RWPE1 (cell line): ENCODE measurements at regions of chr3 and their contacts with region 1.

Region 1: GRCh38 chr3:136752422-136753325 is 496 bp upstream of the STAG1 start:
- DNase-seq: peak; percentile 93
- H3K27ac ChIP-seq: peak overlapping the region; percentile 98
- CTCF ChIP-seq: peak; percentile 48

Region 2: DNA sequence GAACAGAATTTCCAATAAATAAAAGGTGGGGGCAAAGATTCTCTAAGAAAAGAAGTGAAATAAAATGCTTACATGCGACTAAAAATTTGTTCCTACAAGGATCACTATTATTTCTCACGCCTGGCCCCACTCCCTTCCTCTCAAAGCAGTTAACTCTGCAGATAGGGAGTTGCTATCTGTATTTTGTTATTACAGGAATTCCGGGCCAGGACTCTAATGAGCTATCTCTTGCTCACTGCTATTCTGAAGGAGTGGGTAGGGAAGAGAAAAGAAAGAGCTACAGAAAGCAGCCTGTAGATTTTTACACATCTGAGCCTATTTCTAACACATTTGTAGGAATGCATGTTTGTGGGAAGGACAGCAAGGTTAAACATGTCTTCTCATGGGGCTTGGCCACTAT is 362.1 kb before region 1 on chr3:
- CTCF ChIA-PET with region 1: interaction called, 17 read pairs
- POLR2A ChIA-PET with region 1: interaction called, 4 read pairs
- DNase-seq: no peak
- H3K27ac ChIP-seq: no peak overlapping the region
- CTCF ChIP-seq: no peak

Region 3: GRCh38 chr3:136414476-136414875 is 338.2 kb before region 1 on chr3:
- CTCF ChIA-PET with region 1: interaction called, 14 read pairs
- POLR2A ChIA-PET with region 1: no interaction called
- DNase-seq: no peak
- H3K27ac ChIP-seq: no peak overlapping the region
- CTCF ChIP-seq: no peak

Region 4: GRCh38 chr3:137013955-137014688 is 261.4 kb after region 1 on chr3:
- CTCF ChIA-PET with region 1: interaction called, 14 read pairs
- POLR2A ChIA-PET with region 1: interaction called, 7 read pairs
- DNase-seq: peak; percentile 85
- H3K27ac ChIP-seq: peak overlapping the region; percentile 75
- CTCF ChIP-seq: peak; percentile 81